Aorta (tissue), 5 donors: ENCODE measurements at regions of chr3 and their contacts with region 1.

Region 1: GRCh38 chr3:124772081-124772831 is 42.0 kb downstream of the UMPS start:
- DNase-seq: peak in 1 of 2 donors; percentile 58
- ATAC-seq: peak; percentile 51
- H3K4me3 ChIP-seq: no peak overlapping the region
- H3K27ac ChIP-seq: peak overlapping the region in 1 of 2 donors; percentile 14
- H3K4me1 ChIP-seq: peaks cover 0 to 2% of the 10 kb centered on the region in 2 donors
- H3K27me3 ChIP-seq: no peaks in the 10 kb centered on the region

Region 2: GRCh38 chr3:124669470-124669869 is 102.8 kb before region 1 on chr3:
- intact Hi-C with region 1: no loop called
- DNase-seq: no peak
- ATAC-seq: no peak
- H3K4me3 ChIP-seq: no peak overlapping the region
- H3K27ac ChIP-seq: no peak overlapping the region
- H3K4me1 ChIP-seq: no peaks in the 10 kb centered on the region
- H3K27me3 ChIP-seq: no peaks in the 10 kb centered on the region

Region 3: DNA sequence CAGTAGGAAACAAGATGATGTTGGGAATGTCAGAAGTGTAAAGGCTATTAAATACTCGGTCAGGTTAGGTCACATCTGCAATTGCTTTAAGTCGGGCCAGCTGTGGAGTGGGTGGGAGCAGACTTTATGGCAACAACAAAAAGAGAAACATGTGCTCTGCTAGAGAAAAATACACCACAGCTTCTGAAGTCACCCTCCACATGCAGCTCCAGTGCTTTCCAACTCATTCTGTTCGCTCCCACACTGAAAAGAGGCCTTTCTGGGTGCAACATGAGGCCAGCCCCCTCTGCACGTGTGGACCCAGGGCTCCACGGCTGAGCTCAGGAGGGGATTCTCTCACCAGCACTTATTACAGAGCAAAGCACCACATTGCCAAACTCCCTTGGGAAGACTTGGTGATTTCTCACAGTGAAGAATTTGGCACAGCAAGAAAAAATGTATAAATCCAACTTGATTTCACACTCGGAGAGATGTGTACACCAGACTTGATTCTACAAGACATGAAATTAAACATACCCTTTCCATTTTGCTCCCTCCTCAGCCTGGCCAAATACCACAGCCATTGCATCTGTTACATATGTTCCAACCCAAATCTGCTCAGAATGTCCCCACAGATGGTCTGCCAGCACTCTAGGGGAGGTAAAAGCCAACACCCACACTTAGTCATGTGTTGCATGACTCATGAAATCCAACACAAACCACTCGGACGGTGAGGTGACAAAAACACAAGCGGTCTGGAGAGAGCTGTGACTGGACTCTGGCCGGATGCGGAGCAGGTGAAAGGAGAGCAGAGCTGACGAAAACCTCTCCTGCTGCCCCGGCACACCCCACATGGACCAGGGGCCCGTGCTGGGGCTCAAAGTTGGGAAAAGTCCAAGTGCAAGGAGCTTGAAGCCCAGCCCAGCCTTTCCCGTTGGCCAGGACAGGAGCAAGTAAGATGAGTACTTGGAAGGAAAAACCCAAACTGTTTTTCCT is 40.3 kb after region 1 on chr3:
- intact Hi-C with region 1: loop called in 1 of 2 experiments (anchors 5 kb)
- DNase-seq: peak; percentile 84 to 86
- ATAC-seq: peak; percentile 82
- H3K4me3 ChIP-seq: no peak overlapping the region
- H3K27ac ChIP-seq: peak overlapping the region; percentile 91 to 99
- H3K4me1 ChIP-seq: peaks cover 5 to 14% of the 10 kb centered on the region in 2 donors
- H3K27me3 ChIP-seq: no peaks in the 10 kb centered on the region

Region 4: GRCh38 chr3:124834723-124835718 is 62.8 kb after region 1 on chr3:
- intact Hi-C with region 1: loop called in 1 of 2 experiments (anchors 5 kb)
- DNase-seq: peak in 1 of 2 donors; percentile 63
- ATAC-seq: peak; percentile 23
- H3K4me3 ChIP-seq: no peak overlapping the region
- H3K27ac ChIP-seq: peak overlapping the region; percentile 11 to 34
- H3K4me1 ChIP-seq: peaks cover 12 to 26% of the 10 kb centered on the region in 2 donors
- H3K27me3 ChIP-seq: no peaks in the 10 kb centered on the region